Activated CD4-positive, alpha-beta T cell treated with anti-CD3 and anti-CD28 coated beads, Interleukin-2, amount 10 ng/mL, durations not matched to agents 24 days and 14 days (primary cell): ENCODE measurements at regions of chr7 and their contacts with region 1.

Region 1: DNA sequence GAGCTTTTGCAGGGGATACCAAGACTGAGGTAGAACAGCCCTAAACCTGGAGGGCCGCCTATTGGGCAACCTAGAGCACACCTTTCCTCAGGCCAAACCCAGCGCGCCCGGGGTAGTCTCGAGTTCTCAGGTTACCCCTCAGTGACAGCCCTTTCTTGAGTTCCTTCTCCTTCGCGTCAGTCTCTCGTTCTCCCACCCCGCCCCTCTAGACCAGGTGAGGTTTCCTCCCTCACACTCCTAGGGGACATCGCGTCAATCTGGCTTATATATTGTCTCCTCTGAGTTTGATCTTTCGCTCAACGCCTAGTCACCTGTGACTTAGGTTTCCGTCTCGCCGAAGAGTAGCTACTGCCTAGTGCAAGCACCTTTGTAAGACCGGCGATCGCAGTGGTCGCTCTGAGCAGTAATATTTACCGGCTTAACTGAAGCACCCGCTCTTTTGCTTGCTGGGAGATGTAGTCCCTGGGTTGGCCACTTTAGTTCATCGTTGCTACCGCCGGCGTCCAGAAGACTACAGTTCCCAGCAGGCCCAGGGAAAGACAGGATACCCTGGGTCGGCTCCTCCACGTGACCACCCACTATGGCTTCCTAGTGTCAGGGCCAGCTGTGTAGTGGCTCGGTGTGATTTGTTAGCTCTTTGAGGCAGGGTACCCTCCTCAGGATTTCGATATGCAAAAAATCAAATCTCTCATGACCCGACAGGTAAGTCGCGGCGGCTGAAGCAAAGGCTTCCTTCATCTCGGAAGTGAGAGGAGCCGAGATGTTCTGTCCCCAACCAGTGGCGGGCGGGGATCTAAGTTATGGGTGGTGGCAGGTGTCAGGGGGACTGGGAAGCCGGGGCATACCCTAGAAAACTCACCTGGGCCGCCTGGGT is at the start of gene VPS50:
- DNase-seq: peak; percentile 98
- H3K4me3 Mint-ChIP-seq: peak within 1 kb of the TSS; percentile 99
- H3K27ac Mint-ChIP-seq: peak within 1 kb of the TSS; percentile 93
- H3K4me1 Mint-ChIP-seq: peaks cover 13% of the 10 kb centered on the region
- H3K27me3 Mint-ChIP-seq: peaks cover 4% of the 10 kb centered on the region
- total RNA-seq, gene VPS50: 14.7 and 17.1 TPM in 2 replicates

Region 2: GRCh38 chr7:92584996-92585395 is 647.0 kb before region 1 on chr7:
- intact Hi-C with region 1: loop called (anchors 5 kb)
- DNase-seq: peak; percentile 61
- H3K4me3 Mint-ChIP-seq: no peak overlapping the region
- H3K27ac Mint-ChIP-seq: no peak overlapping the region
- H3K4me1 Mint-ChIP-seq: peaks cover 45% of the 10 kb centered on the region
- H3K27me3 Mint-ChIP-seq: no peaks in the 10 kb centered on the region

Region 3: DNA sequence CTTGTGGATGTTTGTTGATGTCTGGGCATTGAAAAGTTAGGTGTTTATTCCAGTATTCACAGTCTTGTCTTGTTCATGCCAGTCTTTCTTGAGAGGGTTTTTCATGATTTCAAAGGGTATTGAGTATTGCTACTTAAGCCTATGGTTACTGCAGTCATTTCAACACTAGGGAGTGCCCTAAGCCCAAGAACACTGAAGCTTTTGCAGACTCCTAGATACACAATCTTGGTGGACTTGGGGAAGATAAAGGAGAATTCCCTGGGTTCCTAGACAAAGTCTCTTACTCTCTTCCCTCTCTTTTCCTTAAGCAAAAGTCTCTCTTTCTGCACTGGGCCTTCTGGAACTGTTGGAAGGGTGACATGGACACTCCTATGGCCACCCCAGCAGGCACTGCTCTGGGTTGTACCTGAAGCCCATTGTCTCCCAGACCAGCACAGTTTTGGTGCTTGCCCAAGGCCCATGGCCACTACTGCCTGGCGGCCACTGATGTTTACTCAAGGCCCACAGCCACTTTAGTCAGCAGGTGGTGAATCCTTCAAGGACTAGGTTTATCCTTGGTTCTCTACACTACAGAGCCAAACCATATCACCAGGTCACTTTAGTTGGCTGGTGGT is 139.2 kb before region 1 on chr7:
- intact Hi-C with region 1: loop called (anchors 1 kb)
- DNase-seq: peak; percentile 65
- H3K4me3 Mint-ChIP-seq: no peak overlapping the region
- H3K27ac Mint-ChIP-seq: no peak overlapping the region
- H3K4me1 Mint-ChIP-seq: no peaks in the 10 kb centered on the region
- H3K27me3 Mint-ChIP-seq: peaks cover 27% of the 10 kb centered on the region

Region 4: GRCh38 chr7:93117852-93118530 is 114.0 kb before region 1 on chr7 and contains the start of gene SAMD9:
- intact Hi-C with region 1: loop called (anchors 1 kb)
- DNase-seq: peak; percentile 90
- H3K4me3 Mint-ChIP-seq: peak within 1 kb of the TSS; percentile 90
- H3K27ac Mint-ChIP-seq: peak within 1 kb of the TSS; percentile 90
- H3K4me1 Mint-ChIP-seq: peaks cover 54% of the 10 kb centered on the region
- H3K27me3 Mint-ChIP-seq: no peaks in the 10 kb centered on the region
- total RNA-seq, gene SAMD9: 8.6 and 9.4 TPM in 2 replicates

Region 5: GRCh38 chr7:93147363-93147762 is 84.7 kb before region 1 on chr7:
- intact Hi-C with region 1: loop called (anchors 2 kb)
- DNase-seq: peak; percentile 84
- H3K4me3 Mint-ChIP-seq: peak overlapping the region; percentile 95
- H3K27ac Mint-ChIP-seq: peak overlapping the region; percentile 74
- H3K4me1 Mint-ChIP-seq: peaks cover 40% of the 10 kb centered on the region
- H3K27me3 Mint-ChIP-seq: no peaks in the 10 kb centered on the region

Region 6: GRCh38 chr7:93435797-93436196 is 203.8 kb after region 1 on chr7:
- intact Hi-C with region 1: no loop called
- DNase-seq: no peak
- H3K4me3 Mint-ChIP-seq: no peak overlapping the region
- H3K27ac Mint-ChIP-seq: no peak overlapping the region
- H3K4me1 Mint-ChIP-seq: peaks cover 2% of the 10 kb centered on the region
- H3K27me3 Mint-ChIP-seq: no peaks in the 10 kb centered on the region

Region 7: DNA sequence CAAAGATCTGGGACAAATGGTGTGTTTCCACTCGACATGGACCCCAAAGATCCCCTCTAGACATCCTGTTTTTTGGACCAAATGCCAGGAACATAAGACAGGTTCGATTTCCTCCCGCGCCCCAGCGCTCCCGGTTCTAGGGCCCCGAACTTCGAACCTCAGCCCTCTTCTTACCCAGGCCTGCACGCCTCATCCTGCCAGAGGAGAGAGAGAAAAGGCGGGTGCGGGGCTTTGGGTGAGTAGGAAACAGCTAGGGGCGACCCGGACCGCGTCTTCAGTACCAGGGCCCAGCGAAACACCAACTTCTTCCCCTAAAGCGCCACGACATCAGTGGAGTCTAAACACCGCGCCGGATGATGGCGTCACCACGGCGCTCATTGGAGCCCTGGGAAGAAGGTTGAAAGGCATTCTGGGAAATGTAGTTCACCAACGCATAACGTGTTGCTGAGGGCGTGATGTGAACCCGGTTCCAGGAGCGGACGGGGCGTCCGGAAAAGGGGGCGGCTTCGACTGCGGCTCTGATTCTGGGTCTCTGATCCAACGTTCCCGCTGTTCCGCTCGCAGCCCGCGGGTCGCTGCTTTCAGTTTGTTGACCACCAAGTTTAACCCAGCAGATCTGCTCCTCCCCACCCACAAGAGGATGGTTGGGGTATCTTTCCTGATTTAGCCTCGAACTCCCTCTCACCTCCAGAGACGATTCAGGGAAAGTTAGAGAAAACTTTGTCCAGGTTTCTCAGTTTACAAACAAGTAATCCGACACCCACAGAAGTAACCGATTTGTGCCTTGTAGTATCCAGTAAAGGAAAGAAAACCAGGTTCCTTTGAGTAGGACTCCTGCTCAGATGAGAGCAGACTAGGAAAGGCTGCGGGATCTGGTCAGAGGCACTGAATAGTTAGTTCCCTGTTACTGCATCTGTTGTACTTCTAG is 772.3 kb after region 1 on chr7 and contains the start of gene BET1:
- intact Hi-C with region 1: loop called (anchors 1 kb)
- DNase-seq: peak; percentile 98
- H3K4me3 Mint-ChIP-seq: peak within 1 kb of the TSS; percentile 94
- H3K27ac Mint-ChIP-seq: peak within 1 kb of the TSS; percentile 96
- H3K4me1 Mint-ChIP-seq: peaks cover 20% of the 10 kb centered on the region
- H3K27me3 Mint-ChIP-seq: peaks cover 17% of the 10 kb centered on the region
- total RNA-seq, gene BET1: 19.1 and 20.0 TPM in 2 replicates